ENCODE measurements at regions of chr1 and their contacts with region 1.

Region 1: DNA sequence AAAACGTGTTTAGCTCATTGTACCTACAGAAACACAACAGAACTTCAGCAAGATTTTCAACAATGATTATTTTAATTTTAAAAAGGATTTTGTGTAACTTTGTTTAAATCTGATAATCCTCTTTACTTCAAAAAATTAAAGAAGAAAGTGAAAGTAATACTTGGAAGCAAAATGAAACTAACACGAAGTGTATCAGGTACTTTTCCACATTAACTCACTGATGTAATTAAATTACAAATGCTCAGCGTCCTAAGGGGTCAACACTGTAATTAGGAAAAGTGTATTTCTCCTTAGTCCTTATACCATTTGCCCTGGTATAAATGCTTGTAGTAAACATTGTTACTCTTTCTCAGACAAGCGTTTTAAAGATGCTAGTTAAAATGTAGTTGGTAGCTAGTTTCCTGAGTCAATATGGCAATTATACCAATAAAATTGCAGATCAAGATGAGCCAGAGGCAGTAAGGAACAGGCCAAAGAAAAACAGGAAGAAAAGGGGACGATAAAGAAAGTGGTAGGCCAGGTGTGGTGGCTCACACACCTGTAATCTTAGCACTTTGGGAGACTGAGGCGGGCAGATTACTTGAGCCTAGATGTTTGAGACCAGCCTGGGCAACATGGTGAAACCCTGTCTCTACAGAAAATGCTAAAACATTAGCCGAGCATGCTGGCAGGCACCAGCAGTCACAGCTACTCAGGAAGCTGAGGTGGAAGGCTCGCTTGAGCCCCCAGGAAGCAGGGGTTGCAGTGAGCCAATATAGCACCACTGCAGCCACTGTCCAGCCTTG is 553.0 kb downstream of the SMYD3 start:
- DNase-seq: peak in 4 of 9 experiments; percentile 3 to 66 (median 48)
- ATAC-seq: peak; percentile 54
- H3K4me3 ChIP-seq: peak overlapping the region; percentile 33 to 49
- H3K4me3 Mint-ChIP-seq: peak overlapping the region; percentile 73
- H3K27ac ChIP-seq: peak overlapping the region; percentile 73 to 97
- H3K27ac Mint-ChIP-seq: peak overlapping the region; percentile 94
- H3K4me1 ChIP-seq: peaks cover 40% of the 10 kb centered on the region
- H3K4me1 Mint-ChIP-seq: peaks cover 28% of the 10 kb centered on the region
- H3K27me3 ChIP-seq: no peaks in the 10 kb centered on the region
- H3K27me3 Mint-ChIP-seq: no peaks in the 10 kb centered on the region
- CTCF ChIP-seq: no peak

Region 2: DNA sequence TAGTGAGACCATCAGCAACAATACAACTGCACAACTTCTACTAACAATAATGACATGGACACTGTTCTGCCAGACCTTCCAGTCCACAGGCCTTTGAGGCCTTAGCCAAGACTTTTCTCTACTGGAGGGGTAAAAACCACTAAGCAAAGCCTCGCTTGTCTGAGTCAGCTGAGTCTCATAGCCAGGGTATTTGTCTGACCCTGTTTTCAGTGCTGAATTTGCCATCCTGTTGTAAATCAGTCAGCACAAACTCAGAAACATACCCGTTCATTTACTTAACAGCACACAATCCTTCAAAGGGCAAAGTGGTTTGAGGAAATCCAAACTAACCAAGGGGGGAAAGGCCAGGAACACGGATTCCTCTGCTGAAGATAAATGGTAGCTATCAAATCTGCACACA is 15.2 kb after region 1 on chr1:
- CTCF ChIA-PET with region 1: no interaction called
- POLR2A ChIA-PET with region 1: no interaction called
- intact Hi-C with region 1: no loop called
- DNase-seq: no peak
- ATAC-seq: no peak
- H3K4me3 ChIP-seq: no peak overlapping the region
- H3K4me3 Mint-ChIP-seq: no peak overlapping the region
- H3K27ac ChIP-seq: no peak overlapping the region
- H3K27ac Mint-ChIP-seq: no peak overlapping the region
- H3K4me1 ChIP-seq: no peaks in the 10 kb centered on the region
- H3K4me1 Mint-ChIP-seq: no peaks in the 10 kb centered on the region
- H3K27me3 ChIP-seq: no peaks in the 10 kb centered on the region
- H3K27me3 Mint-ChIP-seq: no peaks in the 10 kb centered on the region
- CTCF ChIP-seq: no peak

Region 3: GRCh38 chr1:246002725-246003441 is 48.8 kb after region 1 on chr1:
- CTCF ChIA-PET with region 1: no interaction called
- POLR2A ChIA-PET with region 1: no interaction called
- intact Hi-C with region 1: no loop called
- DNase-seq: peak; percentile 68 to 90 (median 81)
- ATAC-seq: peak; percentile 51
- H3K4me3 ChIP-seq: no peak overlapping the region
- H3K4me3 Mint-ChIP-seq: no peak overlapping the region
- H3K27ac ChIP-seq: no peak overlapping the region
- H3K27ac Mint-ChIP-seq: no peak overlapping the region
- H3K4me1 ChIP-seq: no peaks in the 10 kb centered on the region
- H3K4me1 Mint-ChIP-seq: no peaks in the 10 kb centered on the region
- H3K27me3 ChIP-seq: no peaks in the 10 kb centered on the region
- H3K27me3 Mint-ChIP-seq: no peaks in the 10 kb centered on the region
- CTCF ChIP-seq: peak; percentile 87

Region 4: GRCh38 chr1:246117066-246117791 is 163.2 kb after region 1 on chr1:
- CTCF ChIA-PET with region 1: no interaction called
- POLR2A ChIA-PET with region 1: no interaction called
- intact Hi-C with region 1: loop called in 1 of 2 experiments (anchors 5 kb)
- DNase-seq: peak; percentile 9 to 77 (median 42)
- ATAC-seq: peak; percentile 91
- H3K4me3 ChIP-seq: no peak overlapping the region
- H3K4me3 Mint-ChIP-seq: peak overlapping the region; percentile 56
- H3K27ac ChIP-seq: peak overlapping the region in 1 of 2 experiments; percentile 41
- H3K27ac Mint-ChIP-seq: peak overlapping the region; percentile 82
- H3K4me1 ChIP-seq: peaks cover 14% of the 10 kb centered on the region
- H3K4me1 Mint-ChIP-seq: peaks cover 32% of the 10 kb centered on the region
- H3K27me3 ChIP-seq: no peaks in the 10 kb centered on the region
- H3K27me3 Mint-ChIP-seq: no peaks in the 10 kb centered on the region
- CTCF ChIP-seq: peak; percentile 52

Region 5: DNA sequence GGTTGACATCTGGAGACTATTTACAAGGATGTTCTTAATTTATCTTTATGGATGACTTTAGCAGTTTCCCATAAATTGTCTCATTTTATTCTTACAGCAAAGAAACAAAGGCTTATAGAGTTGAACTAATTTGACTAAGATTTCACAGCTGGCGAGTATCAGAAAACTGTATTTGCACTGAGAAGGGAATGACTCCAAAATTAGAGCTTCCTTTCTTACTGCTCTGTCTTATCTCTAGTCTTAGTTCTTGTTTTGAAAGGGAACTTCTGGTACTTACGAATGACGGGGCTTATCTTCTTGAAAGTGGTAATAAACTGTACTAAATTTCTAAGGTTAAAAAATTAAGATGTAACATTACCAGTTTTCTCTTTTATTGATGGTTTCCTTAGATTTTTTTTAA is 625.8 kb after region 1 on chr1:
- CTCF ChIA-PET with region 1: no interaction called
- POLR2A ChIA-PET with region 1: no interaction called
- intact Hi-C with region 1: loop called in 1 of 2 experiments (anchors 10 kb)
- DNase-seq: no peak
- ATAC-seq: no peak
- H3K4me3 ChIP-seq: no peak overlapping the region
- H3K4me3 Mint-ChIP-seq: no peak overlapping the region
- H3K27ac ChIP-seq: no peak overlapping the region
- H3K27ac Mint-ChIP-seq: peak overlapping the region; percentile 14
- H3K4me1 ChIP-seq: peaks cover 52% of the 10 kb centered on the region
- H3K4me1 Mint-ChIP-seq: peaks cover 80% of the 10 kb centered on the region
- H3K27me3 ChIP-seq: no peaks in the 10 kb centered on the region
- H3K27me3 Mint-ChIP-seq: no peaks in the 10 kb centered on the region
- CTCF ChIP-seq: no peak